WTC11 (cell line): ENCODE measurements at regions of chr1 and their contacts with region 1.

Region 1: DNA sequence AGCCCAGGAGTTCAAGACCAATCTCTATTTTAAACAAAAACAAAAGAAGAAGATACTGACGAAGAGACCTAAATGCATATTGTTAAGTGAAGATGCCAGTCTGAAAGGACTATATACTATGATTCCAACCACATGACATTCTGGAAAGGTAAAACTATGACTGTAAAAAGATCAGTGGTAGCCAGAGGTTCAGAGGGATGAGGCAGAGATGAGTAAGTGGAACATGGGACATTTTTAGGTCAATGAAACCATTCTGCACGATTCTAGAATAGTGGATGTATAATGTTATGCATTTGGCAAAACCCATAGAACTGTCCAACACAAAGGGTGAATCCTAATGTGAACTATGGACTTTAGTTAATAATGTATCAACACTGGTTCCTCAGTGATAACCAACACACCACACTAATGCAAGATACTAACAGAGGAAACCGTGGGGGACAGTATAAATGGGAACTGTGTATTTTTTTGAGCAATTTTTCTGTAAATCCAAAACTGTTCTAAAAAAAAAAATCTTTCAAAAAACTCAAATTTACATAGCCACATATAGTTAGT is 8.2 kb downstream of the RC3H1 start:
- DNase-seq: no peak
- ATAC-seq: no peak
- H3K4me3 Mint-ChIP-seq: no peak overlapping the region
- H3K27ac Mint-ChIP-seq: no peak overlapping the region
- H3K4me1 Mint-ChIP-seq: peaks cover 11% of the 10 kb centered on the region; the same call in 1 of the 2 replicates
- H3K27me3 Mint-ChIP-seq: no peaks in the 10 kb centered on the region
- CTCF ChIP-seq: no peak

Region 2: GRCh38 chr1:172532700-172533509 is 1481.0 kb before region 1 on chr1 and contains the start of gene SUCO:
- CTCF ChIA-PET with region 1: no interaction called
- POLR2A ChIA-PET with region 1: interaction called, 17 read pairs
- DNase-seq: peak; percentile 100
- ATAC-seq: peak; percentile 93
- H3K4me3 Mint-ChIP-seq: peak within 1 kb of the TSS; percentile 100
- H3K27ac Mint-ChIP-seq: peak within 1 kb of the TSS; percentile 100
- H3K4me1 Mint-ChIP-seq: peaks cover 43% of the 10 kb centered on the region
- H3K27me3 Mint-ChIP-seq: peaks cover 24% of the 10 kb centered on the region
- CTCF ChIP-seq: no peak
- total RNA-seq, gene SUCO: 32.9 to 37.4 TPM (median 33.7 TPM) in 3 replicates

Region 3: DNA sequence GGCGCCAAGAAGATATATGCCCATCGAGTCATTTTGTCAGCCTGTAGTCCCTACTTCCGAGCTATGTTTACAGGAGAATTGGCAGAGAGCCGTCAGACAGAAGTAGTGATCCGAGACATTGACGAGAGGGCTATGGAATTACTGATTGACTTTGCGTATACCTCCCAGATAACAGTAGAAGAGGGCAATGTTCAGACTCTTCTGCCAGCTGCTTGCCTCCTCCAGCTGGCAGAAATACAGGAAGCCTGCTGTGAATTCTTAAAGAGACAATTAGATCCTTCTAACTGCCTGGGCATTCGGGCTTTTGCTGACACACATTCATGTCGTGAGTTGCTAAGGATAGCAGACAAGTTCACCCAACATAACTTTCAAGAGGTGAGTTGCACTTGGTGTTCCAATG is 280.0 kb before region 1 on chr1:
- CTCF ChIA-PET with region 1: no interaction called
- POLR2A ChIA-PET with region 1: no interaction called
- DNase-seq: no peak
- ATAC-seq: no peak
- H3K4me3 Mint-ChIP-seq: no peak overlapping the region
- H3K27ac Mint-ChIP-seq: no peak overlapping the region
- H3K4me1 Mint-ChIP-seq: no peaks in the 10 kb centered on the region
- H3K27me3 Mint-ChIP-seq: no peaks in the 10 kb centered on the region
- CTCF ChIP-seq: no peak